PC-9 (cell line): ENCODE measurements at regions of chr16 and their contacts with region 1.

Region 1: DNA sequence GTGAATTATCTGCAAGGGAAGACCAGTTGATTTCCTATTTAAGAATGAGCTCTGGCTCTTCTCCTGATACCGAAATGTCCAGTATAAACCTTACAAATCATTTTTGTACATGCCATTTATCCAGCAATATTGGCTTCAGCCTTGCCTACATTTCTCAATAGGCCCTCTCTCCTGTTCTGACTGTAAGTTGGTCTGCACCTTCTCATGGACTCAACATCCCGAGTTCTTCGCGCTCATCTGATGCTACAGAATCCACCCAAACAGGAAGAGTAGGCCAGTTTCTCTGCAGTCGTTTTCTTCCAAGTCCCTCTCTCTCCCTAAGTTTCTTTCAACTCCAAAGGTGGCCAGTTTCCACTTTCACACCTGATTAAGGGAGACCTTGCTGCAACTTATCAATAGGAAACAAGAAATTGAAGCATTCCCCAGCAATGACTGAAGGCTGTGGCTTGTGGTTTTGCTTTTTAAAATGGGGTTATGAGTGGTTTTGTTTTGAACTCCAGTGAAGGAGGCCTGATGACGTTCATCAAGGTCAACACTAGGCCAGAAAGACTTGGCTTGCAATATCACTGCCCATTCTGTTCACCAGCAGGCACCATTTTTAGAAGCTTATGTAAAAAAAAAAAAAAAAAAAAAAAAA is 383.0 kb downstream of the MAF start:
- DNase-seq: no peak
- H3K4me3 ChIP-seq: no peak overlapping the region
- H3K27ac ChIP-seq: no peak overlapping the region
- H3K4me1 ChIP-seq: no peaks in the 10 kb centered on the region
- H3K27me3 ChIP-seq: peaks cover 14% of the 10 kb centered on the region
- CTCF ChIP-seq: no peak

Region 2: DNA sequence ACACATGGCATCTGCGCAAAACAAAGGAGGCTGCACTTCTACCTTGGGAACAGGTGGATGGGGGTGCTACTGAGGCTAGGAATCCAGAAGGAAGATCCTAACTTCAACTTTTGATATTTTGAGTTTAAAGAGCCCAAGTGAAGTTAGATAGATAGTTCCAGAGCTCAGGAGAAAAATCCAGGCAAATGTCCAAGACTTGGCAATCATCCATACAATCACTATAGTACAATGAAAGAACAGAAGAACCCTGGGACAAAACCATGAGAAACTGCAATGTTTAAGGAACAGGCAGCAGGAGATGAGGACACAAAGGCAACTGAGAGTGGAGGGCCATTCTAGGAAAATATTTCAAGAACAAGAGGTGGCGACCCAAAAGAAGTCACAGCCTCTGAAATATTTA is 1574.5 kb after region 1 on chr16:
- CTCF ChIA-PET with region 1: interaction called, 13 read pairs
- POLR2A ChIA-PET with region 1: no interaction called
- intact Hi-C with region 1: no loop called
- DNase-seq: no peak
- H3K4me3 ChIP-seq: no peak overlapping the region
- H3K27ac ChIP-seq: no peak overlapping the region
- H3K4me1 ChIP-seq: no peaks in the 10 kb centered on the region
- H3K27me3 ChIP-seq: peaks cover 34% of the 10 kb centered on the region
- CTCF ChIP-seq: no peak